MCF 10A (cell line): ENCODE measurements at regions of chr12 and their contacts with region 1.

Region 1: GRCh38 chr12:52181746-52182145 is 10.1 kb downstream of the KRT80 start:
- DNase-seq: peak; percentile 84
- H3K4me3 Mint-ChIP-seq: no peak overlapping the region
- H3K27ac Mint-ChIP-seq: no peak overlapping the region
- H3K4me1 Mint-ChIP-seq: peaks cover 56% of the 10 kb centered on the region
- H3K27me3 Mint-ChIP-seq: no peaks in the 10 kb centered on the region
- CTCF ChIP-seq: no peak

Region 2: GRCh38 chr12:52213512-52214420 is 32.0 kb after region 1 on chr12:
- CTCF ChIA-PET with region 1: interaction called, 11 read pairs
- POLR2A ChIA-PET with region 1: interaction called, 8 read pairs
- intact Hi-C with region 1: no loop called
- DNase-seq: peak; percentile 85
- H3K4me3 Mint-ChIP-seq: no peak overlapping the region
- H3K27ac Mint-ChIP-seq: no peak overlapping the region
- H3K4me1 Mint-ChIP-seq: peaks cover 71% of the 10 kb centered on the region
- H3K27me3 Mint-ChIP-seq: no peaks in the 10 kb centered on the region
- CTCF ChIP-seq: peak; percentile 95

Region 3: DNA sequence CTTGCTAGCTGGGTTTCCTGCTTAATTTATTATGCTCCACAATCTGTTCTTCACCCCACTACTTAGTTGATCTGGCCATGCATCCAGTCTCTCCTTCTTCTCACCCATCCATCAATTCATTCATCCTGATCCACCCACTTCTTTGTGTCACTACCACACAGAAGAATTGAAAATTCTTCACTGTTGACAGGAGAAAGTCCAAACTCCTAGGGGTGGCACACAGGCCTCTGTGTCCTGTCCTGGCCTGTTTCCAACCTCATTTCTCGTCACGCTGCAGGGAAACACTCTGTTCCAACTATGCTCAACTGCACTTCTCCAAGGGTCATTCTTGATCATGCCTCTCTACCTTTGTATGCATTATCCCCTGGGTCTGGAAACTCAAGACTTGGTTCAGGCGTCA is 150.1 kb after region 1 on chr12:
- CTCF ChIA-PET with region 1: no interaction called
- POLR2A ChIA-PET with region 1: no interaction called
- intact Hi-C with region 1: no loop called
- DNase-seq: no peak
- H3K4me3 Mint-ChIP-seq: no peak overlapping the region
- H3K27ac Mint-ChIP-seq: no peak overlapping the region
- H3K4me1 Mint-ChIP-seq: peaks cover 25% of the 10 kb centered on the region
- H3K27me3 Mint-ChIP-seq: no peaks in the 10 kb centered on the region
- CTCF ChIP-seq: no peak